CD4-positive, alpha-beta T cell (primary cell): ENCODE measurements at regions of chr14 and their contacts with region 1.

Region 1: DNA sequence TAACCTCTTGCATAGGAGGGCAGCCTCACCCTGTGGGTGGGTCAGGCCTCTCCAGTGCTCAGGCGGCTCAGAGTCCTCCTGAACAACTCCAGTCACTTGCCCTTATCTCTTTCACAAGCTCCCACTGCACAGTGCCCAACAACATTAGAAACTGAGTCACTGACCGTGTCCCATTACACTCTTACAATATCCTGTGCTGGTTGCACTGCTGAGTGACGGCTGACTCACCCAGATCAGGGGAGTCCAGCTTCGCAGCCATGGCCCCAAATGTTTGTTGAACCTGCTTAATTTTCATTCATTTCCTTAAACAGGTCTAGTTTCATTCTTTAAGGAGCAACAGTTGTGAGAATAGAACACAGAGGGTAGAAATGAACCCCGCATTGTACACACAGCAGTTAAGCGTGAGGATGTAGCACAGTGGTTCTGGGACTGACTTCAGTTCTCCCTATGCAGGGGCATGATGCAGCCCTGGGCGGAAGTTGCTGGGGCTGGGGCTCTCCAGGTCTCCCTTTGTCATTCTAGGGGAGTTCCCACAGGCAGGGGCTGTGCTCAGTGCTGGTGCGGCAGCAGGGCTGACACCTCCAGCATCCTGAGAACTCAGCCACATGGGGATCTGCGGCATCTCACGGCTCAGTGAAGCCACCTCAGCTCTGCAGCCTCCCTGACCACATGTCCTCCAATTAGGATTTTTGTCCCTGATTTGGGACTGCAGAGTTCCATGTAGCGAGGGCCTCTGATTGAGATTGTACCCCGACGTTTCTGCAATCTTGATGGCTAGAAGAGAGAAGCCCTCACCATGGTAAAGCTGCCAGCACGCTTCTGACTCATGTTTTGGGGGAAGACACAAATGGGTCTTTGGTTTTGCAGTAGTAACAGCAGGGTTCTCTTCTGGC is 16.1 kb downstream of the GPR68 start:
- DNase-seq: peak in 13 of 14 experiments; percentile 41 to 94 (median 60)
- ATAC-seq: peak; percentile 77
- H3K4me3 ChIP-seq: no peak overlapping the region
- H3K4me3 Mint-ChIP-seq: peak overlapping the region; percentile 13
- H3K27ac ChIP-seq: peak overlapping the region; percentile 58 to 76
- H3K27ac Mint-ChIP-seq: peak overlapping the region; percentile 88
- H3K4me1 ChIP-seq: peaks cover 96% of the 10 kb centered on the region
- H3K4me1 Mint-ChIP-seq: peaks cover 90% of the 10 kb centered on the region
- H3K27me3 ChIP-seq: no peaks in the 10 kb centered on the region
- H3K27me3 Mint-ChIP-seq: no peaks in the 10 kb centered on the region
- CTCF ChIP-seq: no peak

Region 2: DNA sequence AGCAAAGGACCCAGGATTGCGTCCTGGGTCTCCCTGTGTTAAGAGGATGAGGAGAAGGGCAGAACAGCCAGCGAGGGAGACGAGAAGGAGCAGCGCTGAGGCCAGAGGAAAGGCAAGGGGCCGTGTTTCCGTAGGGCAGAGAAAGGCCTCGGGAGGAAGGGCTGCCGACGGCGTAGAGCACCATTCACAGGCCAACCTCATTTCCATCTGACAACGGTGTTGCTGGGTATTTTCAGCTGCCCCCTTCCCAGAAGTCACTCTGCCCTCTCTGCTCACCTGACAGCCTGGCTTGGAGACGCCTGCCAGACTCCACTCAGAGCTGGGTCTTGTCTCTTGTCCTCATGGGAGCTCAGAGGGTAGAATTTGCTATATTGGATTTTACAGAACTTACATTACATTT is 35.3 kb before region 1 on chr14:
- CTCF ChIA-PET with region 1: no interaction called
- POLR2A ChIA-PET with region 1: interaction called, 5 read pairs
- intact Hi-C with region 1: loop called (anchors 5 kb)
- DNase-seq: no peak
- ATAC-seq: no peak
- H3K4me3 ChIP-seq: no peak overlapping the region
- H3K4me3 Mint-ChIP-seq: no peak overlapping the region
- H3K27ac ChIP-seq: no peak overlapping the region
- H3K27ac Mint-ChIP-seq: no peak overlapping the region
- H3K4me1 ChIP-seq: peaks cover 15% of the 10 kb centered on the region
- H3K4me1 Mint-ChIP-seq: peaks cover 17% of the 10 kb centered on the region
- H3K27me3 ChIP-seq: no peaks in the 10 kb centered on the region
- H3K27me3 Mint-ChIP-seq: no peaks in the 10 kb centered on the region
- CTCF ChIP-seq: no peak

Region 3: DNA sequence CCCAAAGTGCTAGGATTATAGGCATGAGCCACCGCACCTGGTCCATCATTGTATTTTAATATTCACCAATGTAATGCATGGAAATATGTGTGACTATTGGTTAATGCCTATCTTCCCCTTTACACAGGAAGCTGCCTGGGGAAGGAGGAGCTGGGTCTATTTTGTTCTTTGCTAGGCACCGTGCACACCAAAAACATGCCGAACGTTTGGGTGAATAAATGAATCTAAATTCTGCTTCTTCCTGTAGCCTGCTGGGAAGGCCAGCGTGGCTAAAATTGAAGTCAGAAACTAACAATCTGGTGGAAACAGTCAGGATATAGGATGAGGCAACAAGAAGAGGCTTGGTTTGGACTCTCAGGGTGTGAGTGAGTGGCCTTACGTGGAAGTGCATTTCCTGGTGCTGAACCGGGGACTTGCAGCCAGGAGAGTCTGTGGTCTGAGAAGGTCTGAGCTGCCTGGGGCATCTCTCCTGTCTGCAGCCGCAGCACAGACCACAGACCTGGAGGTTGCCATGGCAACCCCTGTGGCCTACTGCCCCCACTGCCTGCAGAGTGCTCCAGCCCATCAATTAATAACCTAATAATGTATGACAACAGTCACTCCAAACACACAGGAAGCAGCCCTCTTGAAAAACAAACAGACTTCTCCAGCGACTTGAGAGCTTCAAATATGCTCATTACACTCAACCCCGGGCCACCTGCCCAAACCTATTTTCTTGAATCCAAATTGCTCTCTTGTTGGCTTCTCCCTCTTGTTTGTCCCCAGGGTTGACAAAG is 21.7 kb after region 1 on chr14:
- CTCF ChIA-PET with region 1: interaction called, 19 read pairs
- POLR2A ChIA-PET with region 1: interaction called, 187 read pairs
- intact Hi-C with region 1: loop called in 1 of 2 experiments (anchors 1 kb)
- DNase-seq: peak in 7 of 14 experiments; percentile 27 to 81 (median 52)
- ATAC-seq: no peak
- H3K4me3 ChIP-seq: no peak overlapping the region
- H3K4me3 Mint-ChIP-seq: peak overlapping the region; percentile 79
- H3K27ac ChIP-seq: peak overlapping the region; percentile 59 to 68
- H3K27ac Mint-ChIP-seq: peak overlapping the region; percentile 78
- H3K4me1 ChIP-seq: peaks cover 96% of the 10 kb centered on the region
- H3K4me1 Mint-ChIP-seq: peaks cover 87% of the 10 kb centered on the region
- H3K27me3 ChIP-seq: no peaks in the 10 kb centered on the region
- H3K27me3 Mint-ChIP-seq: no peaks in the 10 kb centered on the region
- CTCF ChIP-seq: no peak

Region 4: DNA sequence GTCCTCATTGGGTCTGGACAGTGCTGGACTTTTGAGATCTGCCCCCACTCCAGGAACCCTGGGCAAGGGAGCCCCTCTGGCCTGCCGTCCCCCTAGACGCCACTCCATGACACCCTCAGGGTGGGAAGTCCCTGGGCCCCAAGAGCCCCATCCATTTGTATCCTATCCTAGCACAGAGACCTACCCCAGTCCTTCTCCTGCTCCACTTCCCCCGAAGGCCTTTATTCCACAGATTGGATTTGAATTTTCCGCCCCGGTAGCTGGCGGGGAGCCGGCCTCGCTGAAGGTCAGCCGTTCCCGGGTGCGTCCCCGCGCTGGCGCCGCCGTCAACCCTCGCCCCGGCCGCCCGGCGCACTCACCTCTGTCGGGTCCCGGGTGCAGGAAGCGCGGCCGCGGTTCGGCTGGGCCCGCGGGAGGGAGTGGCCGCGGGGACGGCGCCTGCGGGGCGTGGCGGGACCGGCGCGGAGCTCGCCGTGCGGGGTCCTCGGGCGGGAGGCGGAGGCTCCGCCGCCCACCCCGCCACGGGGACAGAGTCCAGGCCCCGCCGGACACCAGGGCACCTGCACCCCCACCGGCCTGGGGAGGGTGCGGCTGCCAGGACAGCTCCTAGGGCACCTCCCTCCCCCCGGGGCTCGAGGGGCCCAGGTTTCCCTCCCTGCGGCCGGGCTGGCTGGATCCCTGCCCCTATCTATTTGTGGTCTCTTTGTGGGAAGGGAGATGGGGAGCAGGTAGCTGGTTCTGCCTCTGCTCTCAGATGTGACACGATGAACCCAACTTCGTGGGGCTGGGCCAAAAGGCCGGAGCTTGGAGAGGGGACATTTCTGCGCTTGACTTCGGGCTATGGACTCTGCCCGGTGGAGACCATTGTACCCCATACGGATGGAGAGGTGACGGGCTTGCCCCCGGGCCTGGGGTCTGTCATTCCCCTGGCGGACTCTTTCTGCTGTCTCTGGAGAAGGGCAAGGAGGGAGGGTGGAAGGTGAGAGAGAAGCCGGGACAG is 36.1 kb after region 1 on chr14:
- CTCF ChIA-PET with region 1: no interaction called
- POLR2A ChIA-PET with region 1: no interaction called
- intact Hi-C with region 1: loop called (anchors 2 to 5 kb)
- DNase-seq: peak in 5 of 14 experiments; percentile 30 to 65 (median 48)
- ATAC-seq: peak; percentile 50
- H3K4me3 ChIP-seq: peak overlapping the region; percentile 37
- H3K4me3 Mint-ChIP-seq: peak overlapping the region; percentile 75
- H3K27ac ChIP-seq: peak overlapping the region in 1 of 2 donors; percentile 29
- H3K27ac Mint-ChIP-seq: peak overlapping the region; percentile 24
- H3K4me1 ChIP-seq: peaks cover 42% of the 10 kb centered on the region
- H3K4me1 Mint-ChIP-seq: peaks cover 58% of the 10 kb centered on the region
- H3K27me3 ChIP-seq: no peaks in the 10 kb centered on the region
- H3K27me3 Mint-ChIP-seq: no peaks in the 10 kb centered on the region
- CTCF ChIP-seq: no peak